ENCODE measurements at regions of chr22 and their contacts with region 1.

Region 1: DNA sequence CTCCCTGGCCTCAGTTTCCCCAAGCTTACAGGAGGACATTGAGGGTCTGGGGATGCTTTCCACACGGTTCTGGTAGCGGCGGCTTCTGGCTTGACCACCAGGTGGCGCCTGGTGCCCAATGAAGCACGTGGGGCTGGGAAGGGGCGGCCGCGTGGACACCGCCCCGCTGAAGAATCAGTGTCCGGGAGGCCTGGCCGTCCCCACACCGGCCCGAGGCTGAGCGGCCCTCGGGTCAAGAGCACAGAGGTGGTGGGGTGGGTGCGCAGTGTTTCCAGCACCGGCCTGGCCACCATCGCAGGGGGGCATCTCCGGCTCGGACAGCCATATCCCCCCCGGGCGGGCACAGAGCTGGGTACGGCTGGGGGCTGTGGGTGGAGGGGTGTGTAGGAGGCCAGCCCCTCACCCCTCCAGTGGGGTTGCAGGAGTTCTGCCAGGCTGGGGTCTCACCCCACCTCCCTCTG is 27.8 kb upstream of the PPARA start:
- DNase-seq: peak; percentile 73
- H3K4me3 Mint-ChIP-seq: no peak overlapping the region
- H3K27ac Mint-ChIP-seq: no peak overlapping the region
- H3K4me1 Mint-ChIP-seq: no peaks in the 10 kb centered on the region
- H3K27me3 Mint-ChIP-seq: no peaks in the 10 kb centered on the region

Region 2: GRCh38 chr22:46309526-46310085 is 187.1 kb after region 1 on chr22:
- CTCF ChIA-PET with region 1: interaction called, 16 read pairs
- POLR2A ChIA-PET with region 1: interaction called, 8 read pairs
- DNase-seq: no peak
- H3K4me3 Mint-ChIP-seq: no peak overlapping the region
- H3K27ac Mint-ChIP-seq: no peak overlapping the region
- H3K4me1 Mint-ChIP-seq: peaks cover 12% of the 10 kb centered on the region
- H3K27me3 Mint-ChIP-seq: no peaks in the 10 kb centered on the region

Region 3: GRCh38 chr22:46315976-46316375 is 193.4 kb after region 1 on chr22:
- CTCF ChIA-PET with region 1: interaction called, 16 read pairs
- POLR2A ChIA-PET with region 1: interaction called, 8 read pairs
- DNase-seq: no peak
- H3K4me3 Mint-ChIP-seq: no peak overlapping the region
- H3K27ac Mint-ChIP-seq: no peak overlapping the region
- H3K4me1 Mint-ChIP-seq: no peaks in the 10 kb centered on the region
- H3K27me3 Mint-ChIP-seq: no peaks in the 10 kb centered on the region

Region 4: DNA sequence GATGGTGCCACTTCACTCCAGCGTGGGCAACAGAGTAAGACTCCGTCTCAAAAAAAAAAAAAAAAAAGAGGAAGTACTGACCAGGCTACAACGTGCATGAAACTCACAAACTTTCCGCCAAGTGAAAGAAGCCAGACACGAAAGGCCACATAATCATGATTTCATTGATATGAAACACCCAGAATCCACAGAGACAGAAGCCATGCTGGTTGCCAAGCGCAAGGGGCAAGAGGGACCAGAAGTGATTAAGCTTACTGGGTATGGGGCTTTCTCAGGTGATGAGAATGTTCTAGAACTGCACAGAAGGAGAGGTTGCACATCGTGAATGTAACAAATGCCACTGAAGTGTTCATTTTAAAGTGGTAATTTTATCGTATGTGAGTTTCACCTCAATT is 354.0 kb after region 1 on chr22:
- CTCF ChIA-PET with region 1: no interaction called
- POLR2A ChIA-PET with region 1: no interaction called
- DNase-seq: no peak
- H3K4me3 Mint-ChIP-seq: no peak overlapping the region
- H3K27ac Mint-ChIP-seq: no peak overlapping the region
- H3K4me1 Mint-ChIP-seq: peaks cover 2% of the 10 kb centered on the region
- H3K27me3 Mint-ChIP-seq: peaks cover 22% of the 10 kb centered on the region